ENCODE measurements at regions of chr2 and their contacts with region 1.

Region 1: DNA sequence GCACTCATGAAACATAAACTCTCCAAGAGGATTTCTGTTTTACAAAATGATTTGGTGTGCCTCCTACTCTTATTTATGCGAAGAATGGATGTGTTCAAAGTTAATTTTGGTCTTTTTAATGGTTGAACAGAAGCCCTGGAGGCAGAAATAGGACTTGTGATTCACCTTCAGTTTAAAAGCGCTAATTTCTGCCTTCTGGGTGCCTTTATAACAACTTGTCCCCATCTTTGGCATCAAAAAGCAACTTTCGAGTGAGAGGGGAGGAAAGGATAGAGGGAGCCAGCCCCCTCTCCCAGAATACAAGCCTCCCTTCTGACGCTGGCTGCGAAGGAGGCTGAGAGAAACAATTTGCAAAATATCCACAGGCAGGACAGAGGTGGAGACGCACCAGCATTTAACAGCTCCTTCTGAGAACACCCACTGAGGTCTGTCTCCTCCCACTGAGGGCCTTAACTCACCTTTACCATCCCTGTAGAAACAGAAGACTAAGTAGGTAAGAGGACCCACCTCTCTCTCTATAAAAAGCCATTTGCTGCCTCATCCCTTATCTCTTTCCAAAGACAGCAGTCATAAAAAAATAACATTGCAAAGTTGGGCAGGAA is 24.3 kb upstream of the BCL11A start:
- DNase-seq: no peak
- ATAC-seq: no peak

Region 2: GRCh38 chr2:60320724-60321123 is 257.1 kb before region 1 on chr2:
- intact Hi-C with region 1: no loop called
- DNase-seq: no peak
- ATAC-seq: no peak

Region 3: GRCh38 chr2:60608679-60609078 is 30.9 kb after region 1 on chr2:
- intact Hi-C with region 1: loop called (anchors 1 kb)
- DNase-seq: no peak
- ATAC-seq: no peak

Region 4: DNA sequence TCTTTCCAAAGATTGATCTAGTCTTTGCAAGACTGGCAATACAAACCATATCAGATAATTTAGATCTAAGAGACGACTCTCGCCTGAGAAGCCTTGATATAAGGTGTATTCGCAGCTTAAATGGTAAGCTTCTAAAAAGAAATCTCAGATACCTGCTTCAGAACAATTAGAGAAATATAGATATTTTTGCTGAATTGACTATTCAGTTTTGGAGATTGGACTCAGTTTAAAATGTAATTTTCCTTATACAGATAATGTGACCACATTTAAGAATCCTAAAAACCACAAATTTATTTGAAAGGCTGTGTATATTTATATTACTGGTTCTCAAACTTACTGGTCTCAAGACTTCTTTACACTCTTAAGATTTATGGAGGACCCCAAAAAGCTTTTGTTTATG is 193.7 kb after region 1 on chr2:
- intact Hi-C with region 1: loop called (anchors 5 kb)
- DNase-seq: no peak
- ATAC-seq: no peak